GM10248 (cell line): ENCODE measurements at regions of chr18 and their contacts with region 1.

Region 1: GRCh38 chr18:70069965-70070364 is 122.3 kb upstream of the CD226 start:
- DNase-seq: no peak
- CTCF ChIP-seq: no peak

Region 2: DNA sequence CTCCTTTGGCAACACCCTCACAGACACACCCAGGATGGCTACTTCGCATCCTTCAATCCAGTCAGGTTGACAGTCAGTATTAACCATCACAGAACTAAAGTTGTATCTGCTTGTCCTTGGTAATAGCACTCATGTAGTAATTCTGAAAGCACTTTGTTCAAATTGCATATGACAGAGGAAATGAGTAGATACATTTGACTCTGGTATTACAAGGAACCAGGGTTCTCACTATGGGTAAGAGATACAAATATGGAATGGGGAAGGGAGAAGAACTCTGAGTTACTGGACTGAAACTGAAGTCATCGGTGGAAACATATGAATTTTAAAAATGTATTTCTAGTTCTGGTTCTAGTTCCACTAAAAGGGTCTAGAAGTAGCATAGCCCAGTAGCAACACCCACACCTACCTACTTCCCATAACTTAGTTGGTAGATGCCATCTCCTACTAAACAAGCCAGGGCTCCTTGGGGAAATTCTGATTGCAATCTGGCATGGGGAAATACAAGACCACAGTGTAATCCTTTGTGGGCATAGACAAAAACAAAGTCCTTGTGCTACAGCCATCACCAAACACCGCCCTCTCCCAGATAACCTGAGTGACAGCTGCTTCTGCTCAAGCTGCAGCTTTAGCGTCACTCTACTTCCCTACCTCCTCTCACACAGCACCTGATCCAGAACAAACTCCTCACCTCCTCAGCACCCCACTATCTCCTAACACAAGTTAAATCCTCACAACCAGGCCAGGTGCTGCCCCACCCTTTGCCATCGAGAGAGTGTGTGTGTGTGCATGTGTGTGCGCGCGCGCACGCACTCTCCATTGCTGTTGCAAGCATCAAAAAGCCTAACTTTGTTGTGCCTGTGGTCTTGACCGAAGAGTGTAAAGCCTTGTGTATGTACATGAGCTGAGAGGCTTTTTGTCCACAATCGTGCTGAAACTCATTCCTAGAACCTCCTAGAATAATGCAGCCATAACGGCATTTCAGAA is 90.9 kb before region 1 on chr18:
- CTCF ChIA-PET with region 1: no interaction called
- POLR2A ChIA-PET with region 1: no interaction called
- DNase-seq: peak; percentile 36
- CTCF ChIP-seq: no peak

Region 3: DNA sequence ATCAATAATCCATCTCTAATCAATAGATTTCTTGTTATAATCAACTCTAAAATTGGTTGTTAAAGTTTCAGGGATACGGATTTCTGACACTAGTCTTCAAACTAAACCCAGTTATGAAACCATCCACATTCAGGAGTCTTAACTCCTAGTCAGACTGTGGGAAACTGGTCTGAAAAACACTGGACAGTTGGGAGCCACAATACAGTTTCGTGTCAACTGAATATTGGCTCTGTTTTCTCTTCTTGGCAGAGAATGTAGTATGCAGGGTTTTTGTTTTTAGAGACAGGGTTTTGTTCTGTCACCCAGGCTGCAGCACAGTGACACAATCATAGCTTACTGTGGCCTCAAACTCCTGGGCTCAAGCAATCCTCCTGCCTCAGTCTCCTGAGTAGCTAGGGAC is 12.5 kb after region 1 on chr18:
- CTCF ChIA-PET with region 1: interaction called, 12 read pairs
- POLR2A ChIA-PET with region 1: no interaction called
- DNase-seq: no peak
- CTCF ChIP-seq: no peak